HCT116 (cell line): ENCODE measurements at regions of chr5 and their contacts with region 1.

Region 1: DNA sequence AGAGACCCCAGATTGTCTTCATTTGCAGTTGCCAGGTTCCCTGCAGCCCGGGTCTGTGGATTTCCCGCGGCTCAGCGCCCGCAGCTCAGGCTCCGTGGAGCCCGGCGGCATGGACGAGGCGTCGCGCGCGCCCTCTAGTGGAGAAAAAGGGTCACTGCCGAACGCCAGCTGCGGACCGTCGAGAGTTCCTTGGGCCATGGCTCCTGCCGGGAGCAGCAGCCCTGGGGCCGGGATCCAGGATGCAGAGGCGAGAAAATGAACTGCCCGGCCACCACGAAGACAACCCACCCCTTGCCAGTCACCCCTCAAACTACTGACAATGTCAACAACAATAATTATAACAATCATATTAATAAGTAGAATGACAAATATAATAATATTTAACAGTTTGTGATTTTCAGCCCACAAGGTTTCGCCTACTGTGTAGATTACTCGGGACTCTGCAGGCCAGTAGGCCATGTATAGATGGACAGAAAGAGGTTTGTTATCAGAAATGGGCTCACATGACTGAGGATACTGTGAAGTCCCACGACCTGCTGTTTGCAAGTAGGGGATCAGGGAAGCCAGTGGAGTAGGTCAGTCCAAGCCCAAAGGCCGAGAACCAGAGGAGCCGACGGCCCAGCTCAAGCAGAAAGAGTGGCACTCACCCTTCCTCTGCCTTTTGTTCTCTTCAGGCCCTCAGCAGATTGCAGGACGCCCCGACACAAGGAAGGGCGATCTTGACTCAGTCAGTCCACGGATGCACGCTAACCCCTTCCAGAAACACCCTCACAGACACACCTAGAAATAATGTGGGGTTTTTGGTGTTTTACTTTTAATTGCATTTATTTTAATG is 43.1 kb downstream of the BOD1 start:
- DNase-seq: peak; percentile 22
- ATAC-seq: peak; percentile 99
- H3K4me3 ChIP-seq: peak overlapping the region; percentile 19 to 34; a peak in 3 of 4 replicates
- H3K27ac ChIP-seq: no peak overlapping the region
- H3K4me1 ChIP-seq: peaks cover 0 to 8% of the 10 kb centered on the region in 2 experiments; a peak in 1 of 4 replicates
- H3K27me3 ChIP-seq: no peaks in the 10 kb centered on the region
- CTCF ChIP-seq: peak; percentile 83 to 90 (median 88)
- POLR2A ChIP-seq: no peak
- RAD21 ChIP-seq: peak; percentile 95

Region 2: DNA sequence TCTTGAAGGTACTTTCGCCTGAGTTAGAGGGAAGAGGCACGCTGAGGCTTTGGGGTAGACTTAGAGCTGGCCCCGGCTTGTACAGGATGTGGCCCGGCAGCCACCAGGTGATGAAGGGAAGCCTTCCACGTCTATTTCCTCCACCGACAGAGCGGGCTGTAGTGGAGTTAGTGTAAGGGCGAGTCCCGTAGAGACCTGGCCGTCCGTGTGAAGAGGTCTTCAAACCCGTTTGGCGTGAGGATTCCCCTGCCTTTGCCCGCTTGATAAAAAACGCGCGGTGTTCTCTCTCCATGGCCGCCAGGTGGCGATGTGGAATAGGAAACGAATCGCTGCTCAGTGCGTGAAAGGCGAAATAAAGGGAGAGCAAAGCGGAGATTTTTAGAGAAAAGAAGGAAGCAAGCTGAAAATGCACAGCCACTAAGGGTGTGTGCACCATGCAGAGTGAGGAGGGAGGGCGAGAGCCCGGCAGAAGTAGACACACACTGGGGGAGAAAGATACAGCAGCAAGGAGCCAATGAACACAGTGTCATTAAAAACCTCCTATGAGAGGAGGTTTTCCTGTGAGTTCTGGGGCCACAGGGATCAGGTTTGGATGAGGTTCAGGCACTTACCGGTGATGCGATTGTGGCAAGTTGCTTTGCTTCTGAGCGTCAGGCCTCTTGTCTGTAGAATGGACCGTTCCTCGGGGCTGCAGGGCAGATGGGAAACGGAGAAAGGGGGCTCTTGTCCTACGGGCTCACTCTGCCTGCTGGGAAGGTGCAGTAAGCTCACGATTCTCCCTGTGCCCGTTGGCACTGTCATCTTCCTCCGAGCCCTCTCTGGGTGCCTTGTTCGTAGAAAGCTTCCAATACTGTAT is 279.3 kb before region 1 on chr5:
- CTCF ChIA-PET with region 1: interaction called, 15 read pairs
- POLR2A ChIA-PET with region 1: no interaction called
- RAD21 ChIA-PET with region 1: interaction called in 1 of 2 experiments, 3 read pairs
- intact Hi-C with region 1: loop called (anchors 2 kb)
- DNase-seq: peak; percentile 56
- ATAC-seq: peak; percentile 93
- H3K4me3 ChIP-seq: peak overlapping the region; percentile 10 to 27; a peak in 3 of 4 replicates
- H3K27ac ChIP-seq: no peak overlapping the region
- H3K4me1 ChIP-seq: peaks cover 7 to 20% of the 10 kb centered on the region in 2 experiments; a peak in 3 of 4 replicates
- H3K27me3 ChIP-seq: no peaks in the 10 kb centered on the region
- CTCF ChIP-seq: peak; percentile 77 to 97 (median 89)
- POLR2A ChIP-seq: no peak
- RAD21 ChIP-seq: peak; percentile 99

Region 3: GRCh38 chr5:173396311-173396993 is 176.9 kb before region 1 on chr5:
- CTCF ChIA-PET with region 1: interaction called, 11 read pairs
- POLR2A ChIA-PET with region 1: interaction called, 3 read pairs
- RAD21 ChIA-PET with region 1: no interaction called
- intact Hi-C with region 1: loop called (anchors 1 kb)
- DNase-seq: peak; percentile 19
- ATAC-seq: peak; percentile 91
- H3K4me3 ChIP-seq: no peak overlapping the region
- H3K27ac ChIP-seq: no peak overlapping the region
- H3K4me1 ChIP-seq: peaks cover 0 to 5% of the 10 kb centered on the region in 2 experiments; a peak in 1 of 4 replicates
- H3K27me3 ChIP-seq: no peaks in the 10 kb centered on the region
- CTCF ChIP-seq: peak in 2 of 3 experiments; percentile 48 to 49; a peak in 3 of 6 replicates
- POLR2A ChIP-seq: no peak
- RAD21 ChIP-seq: peak; percentile 43

Region 4: GRCh38 chr5:173451031-173451430 is 122.3 kb before region 1 on chr5:
- CTCF ChIA-PET with region 1: interaction called, 6 read pairs
- POLR2A ChIA-PET with region 1: no interaction called
- RAD21 ChIA-PET with region 1: interaction called in 1 of 2 experiments, 4 read pairs
- intact Hi-C with region 1: loop called (anchors 2 kb)
- DNase-seq: peak; percentile 60
- ATAC-seq: peak; percentile 39
- H3K4me3 ChIP-seq: no peak overlapping the region
- H3K27ac ChIP-seq: no peak overlapping the region
- H3K4me1 ChIP-seq: peaks cover 43 to 56% of the 10 kb centered on the region in 2 experiments
- H3K27me3 ChIP-seq: no peaks in the 10 kb centered on the region
- CTCF ChIP-seq: peak; percentile 57 to 79 (median 78); a peak in 5 of 6 replicates
- POLR2A ChIP-seq: no peak
- RAD21 ChIP-seq: peak; percentile 46